GM12878 (cell line): ENCODE measurements at regions of chr20 and their contacts with region 1.

Region 1: DNA sequence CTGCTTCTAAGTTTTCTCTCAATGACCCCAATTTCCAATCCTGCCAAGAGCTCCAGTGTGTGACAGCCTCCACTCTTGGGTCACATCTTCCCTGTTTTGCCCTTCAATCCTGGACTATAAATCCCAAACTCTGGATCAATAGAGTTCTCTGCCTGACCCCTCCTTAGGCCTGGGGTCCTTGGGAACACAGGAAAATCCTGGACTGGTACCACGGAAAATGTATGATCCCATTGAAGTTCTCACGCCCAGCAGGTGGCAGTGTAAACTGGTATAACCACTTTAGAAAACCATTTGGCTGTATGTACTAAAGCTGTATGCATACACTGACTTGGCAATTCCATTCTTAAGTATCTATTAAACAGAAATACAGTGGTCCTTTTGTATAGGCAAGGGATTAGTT is 98.0 kb downstream of the SNAP25 start:
- DNase-seq: peak; percentile 9
- ATAC-seq: peak; percentile 63
- H3K4me3 ChIP-seq: no peak overlapping the region
- H3K27ac ChIP-seq: no peak overlapping the region
- H3K4me1 ChIP-seq: no peaks in the 10 kb centered on the region
- H3K27me3 ChIP-seq: peaks cover 0 to 2% of the 10 kb centered on the region in 2 experiments; a peak in 2 of 4 replicates
- CTCF ChIP-seq: peak; percentile 35 to 52 (median 40); a peak in 4 of 6 replicates
- EP300 ChIP-seq: no peak
- POLR2A ChIP-seq: no peak
- RAD21 ChIP-seq: peak; percentile 34

Region 2: GRCh38 chr20:10336959-10337728 is 20.6 kb after region 1 on chr20:
- CTCF ChIA-PET with region 1: interaction called, 10 read pairs
- POLR2A ChIA-PET with region 1: no interaction called
- RAD21 ChIA-PET with region 1: interaction called, 5 read pairs
- SMC1A ChIA-PET with region 1: interaction called, 20 read pairs
- in situ Hi-C with region 1: no loop called
- intact Hi-C with region 1: no loop called
- DNase-seq: no peak
- ATAC-seq: peak; percentile 85
- H3K4me3 ChIP-seq: no peak overlapping the region
- H3K27ac ChIP-seq: no peak overlapping the region
- H3K4me1 ChIP-seq: no peaks in the 10 kb centered on the region
- H3K27me3 ChIP-seq: peaks cover 0 to 2% of the 10 kb centered on the region in 2 experiments; a peak in 1 of 4 replicates
- CTCF ChIP-seq: no peak
- EP300 ChIP-seq: no peak; a peak in 1 of 4 replicates
- POLR2A ChIP-seq: no peak
- RAD21 ChIP-seq: no peak

Region 3: GRCh38 chr20:10357974-10358373 is 41.4 kb after region 1 on chr20:
- CTCF ChIA-PET with region 1: interaction called, 12 read pairs
- POLR2A ChIA-PET with region 1: no interaction called
- RAD21 ChIA-PET with region 1: interaction called, 4 read pairs
- SMC1A ChIA-PET with region 1: interaction called, 6 read pairs
- in situ Hi-C with region 1: no loop called
- intact Hi-C with region 1: no loop called
- DNase-seq: no peak
- ATAC-seq: no peak
- H3K4me3 ChIP-seq: no peak overlapping the region
- H3K27ac ChIP-seq: no peak overlapping the region
- H3K4me1 ChIP-seq: no peaks in the 10 kb centered on the region
- H3K27me3 ChIP-seq: no peaks in the 10 kb centered on the region
- CTCF ChIP-seq: no peak
- EP300 ChIP-seq: no peak
- POLR2A ChIP-seq: no peak
- RAD21 ChIP-seq: no peak

Region 4: GRCh38 chr20:10381493-10381892 is 64.9 kb after region 1 on chr20:
- CTCF ChIA-PET with region 1: interaction called, 187 read pairs
- POLR2A ChIA-PET with region 1: no interaction called
- RAD21 ChIA-PET with region 1: interaction called, 80 read pairs
- SMC1A ChIA-PET with region 1: interaction called, 86 read pairs
- in situ Hi-C with region 1: no loop called
- intact Hi-C with region 1: loop called (anchors 1 kb)
- DNase-seq: no peak
- ATAC-seq: peak; percentile 87
- H3K4me3 ChIP-seq: no peak overlapping the region
- H3K27ac ChIP-seq: no peak overlapping the region
- H3K4me1 ChIP-seq: no peaks in the 10 kb centered on the region
- H3K27me3 ChIP-seq: no peaks in the 10 kb centered on the region
- CTCF ChIP-seq: peak in 1 of 3 experiments; percentile 19; a peak in 2 of 6 replicates
- EP300 ChIP-seq: no peak
- POLR2A ChIP-seq: no peak
- RAD21 ChIP-seq: no peak

Region 5: DNA sequence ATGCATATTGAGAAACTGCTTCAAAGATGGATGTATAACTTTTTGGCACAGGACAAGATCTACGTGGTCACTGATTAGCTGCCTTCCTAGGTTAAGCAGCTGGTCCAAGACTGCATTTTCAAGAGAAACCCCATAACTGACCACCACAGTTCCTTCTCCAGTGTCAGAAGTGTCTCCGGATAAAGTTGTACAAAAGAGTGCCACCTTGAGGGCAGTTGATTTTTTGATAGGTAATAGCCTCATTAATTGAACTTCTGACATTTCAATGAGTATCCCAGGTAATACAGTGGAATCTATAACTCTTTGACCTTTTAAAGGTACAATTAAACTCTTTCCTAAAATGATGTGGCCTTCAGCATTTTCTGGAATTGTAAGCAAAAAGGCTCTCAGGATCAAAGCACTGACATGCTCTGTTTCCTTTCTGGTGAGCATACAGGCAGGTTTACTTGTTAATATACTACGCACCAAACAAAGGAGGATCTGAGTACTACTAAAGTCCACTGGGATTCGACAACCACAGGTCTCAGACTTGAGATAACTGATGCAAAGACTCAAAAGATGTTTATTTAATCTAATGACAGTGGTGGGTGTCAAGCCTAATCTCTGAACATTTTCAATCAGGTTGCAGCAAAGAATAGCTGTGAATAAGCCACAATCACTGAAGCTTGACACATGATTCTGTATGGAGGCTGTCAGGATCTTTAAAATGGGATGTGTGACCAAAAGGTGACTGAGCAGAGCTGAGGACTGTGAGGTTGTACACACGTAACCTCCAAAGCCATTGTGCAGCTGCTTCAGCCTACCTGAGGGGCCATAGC is 96.2 kb after region 1 on chr20:
- CTCF ChIA-PET with region 1: interaction called, 39 read pairs
- POLR2A ChIA-PET with region 1: interaction called, 5 read pairs
- RAD21 ChIA-PET with region 1: interaction called, 10 read pairs
- SMC1A ChIA-PET with region 1: interaction called, 22 read pairs
- in situ Hi-C with region 1: no loop called
- intact Hi-C with region 1: loop called (anchors 5 kb)
- DNase-seq: no peak
- ATAC-seq: peak; percentile 85
- H3K4me3 ChIP-seq: no peak overlapping the region
- H3K27ac ChIP-seq: no peak overlapping the region
- H3K4me1 ChIP-seq: peaks cover 8% of the 10 kb centered on the region
- H3K27me3 ChIP-seq: no peaks in the 10 kb centered on the region
- CTCF ChIP-seq: peak; percentile 19 to 32 (median 20); a peak in 1 of 6 replicates
- EP300 ChIP-seq: peak; percentile 26 to 53; a peak in 2 of 4 replicates
- POLR2A ChIP-seq: no peak
- RAD21 ChIP-seq: no peak

Region 6: GRCh38 chr20:10536531-10536930 is 219.9 kb after region 1 on chr20:
- CTCF ChIA-PET with region 1: interaction called, 7 read pairs
- POLR2A ChIA-PET with region 1: no interaction called
- RAD21 ChIA-PET with region 1: interaction called, 9 read pairs
- SMC1A ChIA-PET with region 1: no interaction called
- in situ Hi-C with region 1: no loop called
- intact Hi-C with region 1: loop called (anchors 2 kb)
- DNase-seq: no peak
- ATAC-seq: peak; percentile 74
- H3K4me3 ChIP-seq: no peak overlapping the region
- H3K27ac ChIP-seq: no peak overlapping the region
- H3K4me1 ChIP-seq: peaks cover 1% of the 10 kb centered on the region
- H3K27me3 ChIP-seq: no peaks in the 10 kb centered on the region
- CTCF ChIP-seq: peak; percentile 22 to 55 (median 54); a peak in 5 of 6 replicates
- EP300 ChIP-seq: no peak
- POLR2A ChIP-seq: no peak
- RAD21 ChIP-seq: peak; percentile 52; the same call in 1 of the 2 replicates